Activated CD4-positive, alpha-beta T cell treated with anti-CD3 and anti-CD28 coated beads, Interleukin-2, amount 10 ng/mL, durations not matched to agents 24 days and 14 days (primary cell): ENCODE measurements at regions of chr17 and their contacts with region 1.

Region 1: GRCh38 chr17:18183334-18184142 is at the start of gene ALKBH5:
- DNase-seq: peak; percentile 99
- H3K4me3 Mint-ChIP-seq: peak within 1 kb of the TSS; percentile 97
- H3K27ac Mint-ChIP-seq: peak within 1 kb of the TSS; percentile 99
- H3K4me1 Mint-ChIP-seq: peaks cover 56% of the 10 kb centered on the region
- H3K27me3 Mint-ChIP-seq: no peaks in the 10 kb centered on the region
- total RNA-seq, gene ALKBH5: 158 and 162 TPM in 2 replicates

Region 2: GRCh38 chr17:17972126-17972951 is 211.2 kb before region 1 on chr17 and contains the starts of genes DRC3 and TOM1L2:
- intact Hi-C with region 1: loop called (anchors 1 kb)
- DNase-seq: peak; percentile 100
- H3K4me3 Mint-ChIP-seq: peak within 1 kb of the TSS; percentile 94
- H3K27ac Mint-ChIP-seq: peak within 1 kb of the TSS; percentile 92
- H3K4me1 Mint-ChIP-seq: peaks cover 22% of the 10 kb centered on the region
- H3K27me3 Mint-ChIP-seq: no peaks in the 10 kb centered on the region
- total RNA-seq, gene DRC3: 0.42 TPM in 1 of 2 replicates, not detected in the other
- total RNA-seq, gene TOM1L2: 8.8 and 10.0 TPM in 2 replicates

Region 3: GRCh38 chr17:18141210-18141803 is 42.2 kb before region 1 on chr17:
- intact Hi-C with region 1: loop called (anchors 1 kb)
- DNase-seq: peak; percentile 84
- H3K4me3 Mint-ChIP-seq: no peak overlapping the region
- H3K27ac Mint-ChIP-seq: no peak overlapping the region
- H3K4me1 Mint-ChIP-seq: no peaks in the 10 kb centered on the region
- H3K27me3 Mint-ChIP-seq: no peaks in the 10 kb centered on the region

Region 4: GRCh38 chr17:18225121-18225566 is 41.6 kb after region 1 on chr17:
- intact Hi-C with region 1: loop called (anchors 1 kb)
- DNase-seq: peak; percentile 99
- H3K4me3 Mint-ChIP-seq: peak overlapping the region; percentile 72
- H3K27ac Mint-ChIP-seq: peak overlapping the region; percentile 67
- H3K4me1 Mint-ChIP-seq: peaks cover 19% of the 10 kb centered on the region
- H3K27me3 Mint-ChIP-seq: peaks cover 2% of the 10 kb centered on the region

Region 5: DNA sequence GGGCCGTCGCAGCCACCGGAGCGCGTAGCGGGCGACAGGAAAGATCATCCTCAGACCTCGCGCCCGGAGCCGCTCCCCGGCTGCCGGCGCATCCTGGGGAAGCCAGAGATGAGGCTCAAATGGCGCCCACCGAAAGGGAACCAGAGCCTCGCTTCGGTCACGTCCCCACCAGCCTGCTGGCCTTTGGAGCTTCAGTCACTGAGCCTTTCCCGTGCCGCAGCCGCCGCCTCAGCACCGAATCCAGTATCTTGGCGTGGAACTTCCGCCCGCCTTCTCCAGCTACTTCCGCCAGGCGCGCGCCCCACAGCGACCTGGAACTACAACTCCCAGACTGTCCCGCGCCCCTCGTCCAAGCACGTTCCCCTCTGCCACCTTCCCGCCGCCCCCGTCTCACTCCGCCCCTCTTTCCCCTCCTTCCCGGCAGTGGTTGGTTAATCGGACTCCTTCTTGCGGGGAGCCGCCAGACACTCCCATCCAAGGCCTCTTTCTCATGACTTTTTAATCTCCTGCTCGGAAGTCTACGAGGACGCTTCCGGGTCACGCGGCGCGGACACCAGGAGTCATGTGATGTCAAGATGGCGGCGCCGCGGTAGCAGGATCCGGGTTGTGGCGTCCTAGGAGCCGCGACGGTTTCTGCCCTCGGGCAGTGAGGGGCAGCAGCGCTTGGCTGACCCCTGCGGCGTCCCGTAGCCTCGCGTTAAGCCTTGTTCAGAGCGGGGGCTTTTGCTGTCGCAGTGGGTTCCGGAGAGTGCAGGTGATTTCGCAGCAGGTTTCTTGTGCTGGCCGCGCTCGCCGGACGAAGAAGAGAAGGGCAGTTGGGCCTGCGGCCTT is 131.4 kb after region 1 on chr17 and contains the starts of genes SMCR8 and TOP3A:
- intact Hi-C with region 1: loop called (anchors 1 kb)
- DNase-seq: peak; percentile 99
- H3K4me3 Mint-ChIP-seq: peak within 1 kb of the TSS; percentile 85
- H3K27ac Mint-ChIP-seq: peak within 1 kb of the TSS; percentile 98
- H3K4me1 Mint-ChIP-seq: peaks cover 65% of the 10 kb centered on the region
- H3K27me3 Mint-ChIP-seq: no peaks in the 10 kb centered on the region
- total RNA-seq, gene SMCR8: 17.3 and 17.7 TPM in 2 replicates
- total RNA-seq, gene TOP3A: 75.4 and 88.2 TPM in 2 replicates